ENCODE measurements at regions of chr10 and their contacts with region 1.

Region 1: GRCh38 chr10:131900350-131901146 is at the start of gene PPP2R2D:
- DNase-seq: peak; percentile 88 to 93 (median 91)
- H3K4me3 ChIP-seq: peak within 1 kb of the TSS; percentile 80 to 86 (median 80)
- H3K4me3 Mint-ChIP-seq: peak within 1 kb of the TSS; percentile 87 to 90
- H3K27ac ChIP-seq: peak within 1 kb of the TSS; percentile 74 to 78
- H3K27ac Mint-ChIP-seq: peak within 1 kb of the TSS; percentile 84 to 92 (median 87)
- H3K4me1 ChIP-seq: peaks cover 23 to 39% of the 10 kb centered on the region in 2 donors
- H3K4me1 Mint-ChIP-seq: peaks cover 46% of the 10 kb centered on the region
- H3K27me3 ChIP-seq: peaks cover 0 to 7% of the 10 kb centered on the region in 2 donors
- H3K27me3 Mint-ChIP-seq: peaks cover 11 to 27% (median 16%) of the 10 kb centered on the region in 3 donors
- CTCF ChIP-seq: no peak
- polyA plus RNA-seq, gene PPP2R2D: 12.8 to 23.5 (median 12.9) TPM

Region 2: DNA sequence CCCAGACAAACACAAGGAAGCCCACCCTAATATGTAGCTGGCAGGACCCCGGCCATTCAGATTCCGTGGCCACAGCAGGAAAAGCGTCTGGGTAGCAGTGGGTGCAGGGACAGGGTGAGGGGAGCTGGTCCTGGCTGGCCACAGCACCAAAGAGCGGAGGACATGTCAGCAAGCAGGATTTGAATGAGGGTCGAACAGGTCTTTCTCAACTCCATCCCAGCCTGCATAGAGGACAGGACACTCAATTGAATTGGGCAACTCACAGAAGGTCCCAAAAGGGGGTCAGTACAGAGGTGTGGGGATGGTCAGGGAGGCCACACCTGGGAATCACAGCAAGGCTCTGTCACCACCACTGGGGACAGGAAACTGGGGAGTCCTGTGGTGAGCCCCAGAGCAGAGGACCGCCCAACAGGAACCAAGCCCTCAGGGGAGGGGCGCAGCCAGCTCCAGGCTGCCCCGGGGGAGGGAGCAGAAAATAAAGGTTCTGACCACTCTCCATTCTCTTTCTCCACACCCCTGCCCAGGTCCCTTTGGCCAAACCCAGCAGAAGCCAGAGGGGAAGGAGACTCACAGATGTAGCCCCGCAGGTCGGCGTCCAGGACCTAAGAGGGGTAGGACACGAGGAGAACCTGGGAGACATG is 108.4 kb before region 1 on chr10:
- intact Hi-C with region 1: no loop called
- DNase-seq: no peak
- H3K4me3 ChIP-seq: no peak overlapping the region
- H3K4me3 Mint-ChIP-seq: no peak overlapping the region
- H3K27ac ChIP-seq: no peak overlapping the region
- H3K27ac Mint-ChIP-seq: no peak overlapping the region
- H3K4me1 ChIP-seq: no peaks in the 10 kb centered on the region
- H3K4me1 Mint-ChIP-seq: no peaks in the 10 kb centered on the region
- H3K27me3 ChIP-seq: no peaks in the 10 kb centered on the region
- H3K27me3 Mint-ChIP-seq: peaks cover 4 to 6% (median 6%) of the 10 kb centered on the region in 3 donors
- CTCF ChIP-seq: no peak

Region 3: DNA sequence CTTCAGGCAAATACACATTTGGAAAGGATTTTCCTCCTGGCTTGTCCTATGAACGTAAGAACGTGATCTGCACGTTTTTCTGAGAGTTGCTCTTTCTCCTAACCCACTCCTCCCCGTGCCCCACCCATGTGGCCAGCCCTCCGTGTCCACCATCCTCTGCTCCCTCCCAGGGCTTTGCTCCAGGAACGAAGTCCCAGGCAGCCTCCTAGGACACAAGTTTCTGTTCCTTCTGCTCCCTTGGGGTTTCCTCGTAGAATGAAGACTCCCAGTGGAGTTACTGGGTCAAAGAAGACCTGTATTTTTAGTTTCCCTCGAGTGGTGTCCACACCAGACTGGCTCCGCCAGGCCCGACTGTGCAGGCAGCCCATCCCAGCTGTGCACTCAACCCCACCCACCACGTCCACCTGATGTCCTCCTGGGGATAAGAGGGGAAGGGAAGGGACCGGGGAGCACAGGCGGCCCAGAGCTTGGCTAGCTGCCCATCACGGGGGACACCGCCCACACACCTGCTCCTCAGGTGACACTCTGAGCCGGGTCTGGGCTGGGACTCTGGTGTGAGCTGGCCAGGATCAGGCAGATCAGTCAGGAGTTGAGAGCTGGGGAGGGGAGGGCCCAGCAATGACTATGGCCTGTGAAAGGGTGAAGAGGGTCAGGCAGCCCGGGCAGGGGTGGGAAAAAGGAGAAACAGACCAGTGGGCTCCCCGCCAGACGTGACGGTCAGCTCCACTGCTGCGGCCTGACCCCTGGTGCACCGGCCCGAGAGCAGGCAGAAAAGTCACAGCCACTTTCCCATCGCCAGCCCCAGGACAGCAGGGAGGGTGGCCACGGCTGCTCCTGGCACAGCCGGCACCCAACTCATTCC is 54.1 kb before region 1 on chr10:
- intact Hi-C with region 1: no loop called
- DNase-seq: no peak
- H3K4me3 ChIP-seq: no peak overlapping the region
- H3K4me3 Mint-ChIP-seq: no peak overlapping the region
- H3K27ac ChIP-seq: no peak overlapping the region
- H3K27ac Mint-ChIP-seq: peak overlapping the region in 2 of 7 donors; percentile 48 to 61
- H3K4me1 ChIP-seq: no peaks in the 10 kb centered on the region
- H3K4me1 Mint-ChIP-seq: no peaks in the 10 kb centered on the region
- H3K27me3 ChIP-seq: no peaks in the 10 kb centered on the region
- H3K27me3 Mint-ChIP-seq: peaks cover 1 to 5% (median 3%) of the 10 kb centered on the region in 3 donors
- CTCF ChIP-seq: no peak

Region 4: DNA sequence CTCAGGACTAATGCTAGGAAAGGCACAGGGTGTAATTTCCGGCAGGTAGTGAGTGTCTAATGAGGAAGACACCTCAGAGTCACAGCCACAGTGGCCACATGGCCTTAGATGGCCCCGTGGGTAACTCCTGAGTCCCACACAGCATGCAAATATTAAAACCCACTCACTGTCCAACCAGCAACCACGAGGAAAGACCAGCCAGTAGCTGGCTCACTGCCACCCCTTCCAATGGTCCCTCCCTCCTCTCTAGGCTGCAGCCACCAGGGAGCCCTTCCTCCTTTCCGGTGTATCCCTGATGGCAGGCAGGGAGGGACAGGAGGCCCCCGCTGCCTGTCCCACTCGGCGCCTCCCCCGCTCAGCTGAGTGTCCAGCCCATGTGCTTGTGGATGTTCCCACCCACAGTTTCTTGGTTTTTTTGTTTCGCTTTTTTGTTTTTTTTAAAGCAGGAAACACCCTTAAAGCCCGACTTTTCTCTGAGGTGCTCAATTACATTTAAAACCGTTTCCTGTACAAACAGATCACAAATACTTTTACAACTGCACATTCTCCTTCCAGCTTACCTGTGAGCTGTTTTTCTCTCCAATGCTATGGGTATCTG is 72.0 kb after region 1 on chr10:
- intact Hi-C with region 1: no loop called
- DNase-seq: no peak
- H3K4me3 ChIP-seq: no peak overlapping the region
- H3K4me3 Mint-ChIP-seq: no peak overlapping the region
- H3K27ac ChIP-seq: no peak overlapping the region
- H3K27ac Mint-ChIP-seq: no peak overlapping the region
- H3K4me1 ChIP-seq: no peaks in the 10 kb centered on the region
- H3K4me1 Mint-ChIP-seq: no peaks in the 10 kb centered on the region
- H3K27me3 ChIP-seq: no peaks in the 10 kb centered on the region
- H3K27me3 Mint-ChIP-seq: peaks cover 4 to 5% (median 4%) of the 10 kb centered on the region in 3 donors
- CTCF ChIP-seq: no peak

Region 5: GRCh38 chr10:132331526-132332432 is 431.2 kb after region 1 on chr10 and contains the start of gene LRRC27:
- intact Hi-C with region 1: loop called in 1 of 2 experiments (anchors 5 kb)
- DNase-seq: peak; percentile 94 to 99 (median 98)
- H3K4me3 ChIP-seq: peak within 1 kb of the TSS; percentile 95 to 97 (median 96)
- H3K4me3 Mint-ChIP-seq: peak within 1 kb of the TSS; percentile 86 to 96
- H3K27ac ChIP-seq: peak within 1 kb of the TSS; percentile 86 to 88
- H3K27ac Mint-ChIP-seq: peak within 1 kb of the TSS; percentile 87 to 96 (median 94)
- H3K4me1 ChIP-seq: peaks cover 73 to 76% of the 10 kb centered on the region in 2 donors
- H3K4me1 Mint-ChIP-seq: peaks cover 81% of the 10 kb centered on the region
- H3K27me3 ChIP-seq: no peaks in the 10 kb centered on the region
- H3K27me3 Mint-ChIP-seq: peaks cover 0 to 2% (median 0%) of the 10 kb centered on the region in 3 donors
- CTCF ChIP-seq: no peak
- polyA plus RNA-seq, gene LRRC27: 3.6 to 12.8 (median 3.6) TPM

Measured in CD14-positive monocyte (primary cell).